Activated naive CD4-positive, alpha-beta T cell treated with anti-CD3 and anti-CD28 coated beads, Interleukin-2, amount 10 ng/mL, durations not matched to agents 7 days and 5 days (primary cell): ENCODE measurements at regions of chr21 and their contacts with region 1.

Region 1: GRCh38 chr21:35400233-35400957 is 351.3 kb upstream of the RUNX1 start:
- DNase-seq: peak; percentile 50
- H3K4me3 Mint-ChIP-seq: no peak overlapping the region
- H3K27ac Mint-ChIP-seq: no peak overlapping the region
- H3K4me1 Mint-ChIP-seq: peaks cover 13% of the 10 kb centered on the region
- H3K27me3 Mint-ChIP-seq: peaks cover 14% of the 10 kb centered on the region

Region 2: GRCh38 chr21:34888569-34889319 is 511.7 kb before region 1 on chr21:
- CTCF ChIA-PET with region 1: interaction called, 12 read pairs
- DNase-seq: peak; percentile 85
- H3K4me3 Mint-ChIP-seq: peak overlapping the region; percentile 85
- H3K27ac Mint-ChIP-seq: peak overlapping the region; percentile 97
- H3K4me1 Mint-ChIP-seq: peaks cover 57% of the 10 kb centered on the region
- H3K27me3 Mint-ChIP-seq: peaks cover 13% of the 10 kb centered on the region

Region 3: GRCh38 chr21:35428489-35428888 is 28.1 kb after region 1 on chr21:
- CTCF ChIA-PET with region 1: no interaction called
- DNase-seq: peak; percentile 63
- H3K4me3 Mint-ChIP-seq: no peak overlapping the region
- H3K27ac Mint-ChIP-seq: no peak overlapping the region
- H3K4me1 Mint-ChIP-seq: peaks cover 23% of the 10 kb centered on the region
- H3K27me3 Mint-ChIP-seq: peaks cover 9% of the 10 kb centered on the region